Endothelial cell of umbilical vein (primary cell): ENCODE measurements at regions of chr10 and their contacts with region 1.

Region 1: GRCh38 chr10:97400665-97401454 is at the start of gene RRP12:
- DNase-seq: peak; percentile 97
- H3K4me3 ChIP-seq: peak within 1 kb of the TSS; percentile 54 to 84 (median 58)
- H3K27ac ChIP-seq: peak within 1 kb of the TSS; percentile 75
- H3K4me1 ChIP-seq: peaks cover 10% of the 10 kb centered on the region
- H3K27me3 ChIP-seq: no peaks in the 10 kb centered on the region
- CTCF ChIP-seq: peak in 1 of 2 donors; percentile 5
- POLR2A ChIP-seq: no peak
- total RNA-seq, gene RRP12: 35.8 and 40.9 TPM in 2 replicates

Region 2: DNA sequence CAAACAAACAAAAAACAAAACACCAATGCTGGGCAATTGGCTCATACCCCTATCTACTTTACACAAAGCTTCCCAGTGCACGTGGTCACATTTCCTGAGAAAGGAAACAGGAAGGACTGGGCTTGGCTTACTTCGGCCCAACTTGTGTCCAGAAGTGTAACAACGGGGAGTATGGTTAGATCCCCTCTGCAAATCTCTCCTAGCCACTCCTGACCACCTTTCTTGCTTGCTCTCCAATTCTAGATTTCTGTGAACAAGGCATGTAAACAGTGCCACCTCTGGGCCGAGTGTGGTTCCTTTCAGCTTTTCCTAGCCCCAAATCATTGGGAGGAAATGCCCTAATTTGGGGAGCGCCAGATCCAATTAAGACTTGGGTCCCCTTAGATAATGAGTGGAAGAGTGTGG is 45.3 kb before region 1 on chr10:
- CTCF ChIA-PET with region 1: interaction called, 6 read pairs
- POLR2A ChIA-PET with region 1: interaction called, 3 read pairs
- dilution Hi-C with region 1: no loop called
- intact Hi-C with region 1: loop called (anchors 2 kb)
- DNase-seq: peak; percentile 80
- H3K4me3 ChIP-seq: no peak overlapping the region
- H3K27ac ChIP-seq: peak overlapping the region; percentile 36
- H3K4me1 ChIP-seq: peaks cover 13% of the 10 kb centered on the region
- H3K27me3 ChIP-seq: no peaks in the 10 kb centered on the region
- CTCF ChIP-seq: peak; percentile 39 to 45
- POLR2A ChIP-seq: no peak

Region 3: DNA sequence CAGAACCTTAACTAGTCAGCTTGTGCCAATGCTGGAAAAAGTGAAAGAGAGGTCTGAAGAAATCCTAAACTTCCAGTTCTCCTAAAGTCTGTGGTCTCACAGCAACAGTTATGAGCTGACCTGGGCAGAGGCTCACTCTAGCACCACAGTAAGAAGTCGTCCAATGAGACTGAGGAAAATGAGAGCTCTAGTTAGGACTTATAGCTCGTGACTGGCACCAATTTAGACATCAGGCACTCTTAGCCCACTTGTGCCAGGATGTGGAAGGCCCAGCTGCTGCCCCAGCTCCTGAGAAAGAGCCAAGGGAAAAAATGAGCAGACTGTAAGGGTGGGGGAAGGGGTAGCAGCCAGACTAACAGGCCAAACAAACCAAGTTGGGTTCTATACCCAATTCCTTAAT is 89.7 kb after region 1 on chr10:
- CTCF ChIA-PET with region 1: no interaction called
- POLR2A ChIA-PET with region 1: no interaction called
- dilution Hi-C with region 1: no loop called
- intact Hi-C with region 1: no loop called
- DNase-seq: peak; percentile 28
- H3K4me3 ChIP-seq: no peak overlapping the region
- H3K27ac ChIP-seq: no peak overlapping the region
- H3K4me1 ChIP-seq: peaks cover 12% of the 10 kb centered on the region
- H3K27me3 ChIP-seq: no peaks in the 10 kb centered on the region
- CTCF ChIP-seq: no peak
- POLR2A ChIP-seq: no peak